BJ (cell line): ENCODE measurements at regions of chr9 and their contacts with region 1.

Region 1: GRCh38 chr9:34701769-34702736 is 7.9 kb downstream of the CCL21 start:
- DNase-seq: peak; percentile 40
- H3K4me3 ChIP-seq: peak overlapping the region; percentile 63
- H3K27me3 ChIP-seq: no peaks in the 10 kb centered on the region
- CTCF ChIP-seq: peak; percentile 100

Region 2: DNA sequence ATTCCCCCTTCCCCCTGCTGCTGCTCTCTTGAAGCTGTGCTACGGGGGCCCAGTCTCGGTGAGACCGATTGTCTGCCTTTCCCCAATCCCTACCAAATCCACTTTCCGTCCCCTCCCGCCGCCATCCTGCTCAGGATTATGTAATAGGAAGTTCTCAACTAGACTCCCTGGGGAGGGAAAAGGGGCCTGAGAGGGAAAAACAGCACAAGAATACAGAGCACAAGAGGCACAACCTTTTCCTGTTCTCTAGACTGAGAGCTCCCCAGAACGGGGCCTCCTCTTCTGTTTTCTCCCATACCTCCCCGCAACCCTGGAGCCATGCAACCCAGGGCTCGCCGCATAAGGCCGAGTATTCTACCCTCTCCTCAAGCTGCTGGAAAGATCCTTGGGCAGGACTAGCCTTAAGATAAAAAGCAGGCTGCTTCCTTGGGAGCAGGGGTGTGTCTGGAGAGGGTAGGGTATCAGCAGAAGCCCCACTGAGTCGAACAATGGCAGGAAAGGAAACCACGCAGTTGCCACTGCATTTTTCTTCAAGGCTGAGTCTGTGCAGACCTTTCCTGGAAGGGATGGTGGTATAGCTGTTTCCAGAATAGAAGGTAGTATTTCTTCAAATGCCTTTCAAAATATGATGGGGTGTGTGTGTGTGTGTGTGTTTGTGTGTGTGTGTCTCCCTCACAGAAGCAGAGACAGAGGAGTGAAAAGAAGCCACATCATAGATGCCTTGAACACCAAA is 338.3 kb before region 1 on chr9:
- CTCF ChIA-PET with region 1: no interaction called
- POLR2A ChIA-PET with region 1: no interaction called
- DNase-seq: no peak
- H3K4me3 ChIP-seq: no peak overlapping the region
- H3K27me3 ChIP-seq: no peaks in the 10 kb centered on the region; the same call in 1 of the 2 replicates
- CTCF ChIP-seq: no peak

Region 3: DNA sequence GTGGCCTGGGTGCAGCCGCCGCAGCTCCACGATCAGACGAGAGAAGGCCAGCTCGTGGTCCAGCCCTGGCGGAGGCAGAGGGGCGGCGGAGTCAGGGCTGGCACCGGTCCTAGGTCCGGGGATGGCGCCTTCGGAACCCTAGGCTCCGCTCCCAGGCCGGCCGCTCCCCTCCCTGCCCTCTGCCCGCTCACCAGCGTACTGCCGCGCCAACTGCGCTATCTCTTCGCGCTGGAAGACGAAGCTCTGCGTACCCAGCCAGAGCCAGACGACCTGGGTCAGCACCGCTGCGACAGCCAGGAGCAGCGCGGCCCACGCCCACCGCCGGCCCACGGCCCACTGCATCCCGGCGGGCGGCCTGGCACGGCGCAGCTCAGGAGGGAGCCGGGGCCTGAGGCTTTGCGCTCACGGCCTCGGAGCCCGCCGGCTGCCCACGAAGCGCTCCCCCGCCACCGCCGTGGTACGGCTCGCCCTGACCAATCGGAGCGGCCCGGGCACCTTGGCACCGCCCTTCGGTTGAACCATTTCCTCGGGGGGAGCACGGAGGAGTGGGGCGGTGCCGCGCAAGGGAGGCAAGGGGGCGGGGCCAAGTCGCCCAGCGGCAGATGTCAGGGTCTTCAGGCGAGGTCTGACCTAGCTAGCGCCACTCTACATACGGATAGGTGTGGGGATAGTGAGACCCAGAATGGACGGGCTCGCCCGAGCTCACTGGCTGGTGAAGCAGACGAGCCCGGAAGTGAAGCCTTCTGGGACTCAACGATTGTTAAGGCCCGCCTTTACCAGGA is 64.5 kb before region 1 on chr9 and contains the start of gene SIGMAR1:
- CTCF ChIA-PET with region 1: interaction called, 34 read pairs
- POLR2A ChIA-PET with region 1: no interaction called
- DNase-seq: no peak
- H3K4me3 ChIP-seq: peak within 1 kb of the TSS; percentile 78
- H3K27me3 ChIP-seq: no peaks in the 10 kb centered on the region
- CTCF ChIP-seq: no peak
- polyA plus RNA-seq, gene SIGMAR1: 65.4 and 95.5 TPM in 2 replicates

Region 4: DNA sequence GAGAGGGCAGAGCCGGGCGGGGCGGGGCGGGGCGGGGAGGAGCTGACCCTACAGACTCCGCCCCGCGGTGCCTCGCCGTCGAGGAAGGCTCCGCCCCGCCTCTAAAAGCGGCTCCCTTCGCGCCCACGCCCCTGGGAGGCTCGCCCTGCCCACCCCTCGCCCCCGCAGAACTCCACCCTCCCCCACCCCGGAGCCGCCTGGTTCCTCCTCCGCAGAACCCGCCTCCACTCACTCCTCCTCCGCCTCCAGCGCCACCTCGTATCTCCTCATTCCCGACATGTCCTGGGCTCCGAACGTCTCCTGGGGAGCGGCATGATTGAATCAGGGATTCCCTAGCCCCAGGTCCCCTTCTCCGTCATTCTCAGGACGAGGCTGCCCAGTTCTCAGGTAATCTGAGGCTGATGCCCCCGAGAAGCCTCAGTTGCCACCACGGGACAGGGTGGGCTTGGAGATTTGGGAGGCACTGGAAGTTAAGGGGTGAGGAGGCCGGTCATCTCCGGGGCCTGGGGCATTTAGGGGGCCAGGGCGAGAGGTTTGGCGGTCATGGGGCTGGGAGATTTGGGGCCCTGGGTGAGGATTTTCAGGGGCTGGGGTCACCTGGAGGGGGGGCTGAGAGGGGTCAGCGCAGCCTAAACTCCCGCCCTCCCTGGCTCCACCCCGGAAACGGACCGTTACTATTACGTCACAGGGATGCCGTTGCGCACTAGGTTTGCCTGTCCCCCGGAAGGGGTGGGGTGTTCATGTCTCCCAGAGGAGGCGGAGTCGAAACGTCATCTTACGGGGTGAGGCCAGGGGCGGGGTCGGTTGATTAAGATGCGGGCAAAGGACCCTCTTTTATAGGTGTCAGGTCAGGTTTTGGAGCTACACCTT is 36.4 kb before region 1 on chr9:
- CTCF ChIA-PET with region 1: interaction called, 16 read pairs
- POLR2A ChIA-PET with region 1: no interaction called
- DNase-seq: peak; percentile 58
- H3K4me3 ChIP-seq: peak overlapping the region; percentile 93
- H3K27me3 ChIP-seq: no peaks in the 10 kb centered on the region
- CTCF ChIP-seq: no peak

Region 5: DNA sequence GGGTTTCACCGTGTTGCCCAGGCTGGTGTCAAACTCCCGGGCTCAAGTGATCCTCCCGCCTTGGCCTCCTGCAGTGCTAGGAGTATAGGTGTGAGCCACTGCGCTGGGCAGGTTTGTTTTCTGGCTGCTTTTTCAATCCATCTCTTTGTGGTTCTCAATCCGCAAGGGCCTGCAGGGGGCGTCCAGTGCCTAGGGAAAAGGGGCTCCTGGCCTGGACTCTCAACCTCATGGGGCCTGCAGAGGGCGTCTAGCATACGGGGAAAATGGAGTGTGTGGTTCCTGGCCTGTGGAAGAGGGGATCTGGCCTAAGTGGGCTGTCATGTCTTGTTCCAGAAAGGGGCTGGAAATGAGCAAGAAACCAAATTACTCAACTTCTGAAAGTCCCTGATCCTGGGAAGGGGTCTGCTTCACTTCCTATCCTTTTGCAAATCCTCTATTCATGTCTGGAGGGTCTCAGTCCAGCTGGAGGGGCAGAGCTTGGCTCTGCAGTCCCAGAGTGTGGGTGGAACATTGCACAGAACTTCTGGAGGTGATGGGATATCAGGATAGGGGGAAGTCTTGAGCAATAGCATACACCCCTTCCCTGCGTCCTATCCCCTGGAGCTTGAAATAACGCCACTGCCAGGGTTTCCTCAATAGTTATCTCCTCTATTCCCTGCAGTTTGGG is 26.9 kb before region 1 on chr9:
- CTCF ChIA-PET with region 1: interaction called, 45 read pairs
- POLR2A ChIA-PET with region 1: no interaction called
- DNase-seq: no peak
- H3K4me3 ChIP-seq: no peak overlapping the region
- H3K27me3 ChIP-seq: no peaks in the 10 kb centered on the region
- CTCF ChIP-seq: peak; percentile 88

Region 6: GRCh38 chr9:34686231-34686630 is 15.8 kb before region 1 on chr9:
- CTCF ChIA-PET with region 1: interaction called, 39 read pairs
- POLR2A ChIA-PET with region 1: no interaction called
- DNase-seq: no peak
- H3K4me3 ChIP-seq: no peak overlapping the region
- H3K27me3 ChIP-seq: no peaks in the 10 kb centered on the region
- CTCF ChIP-seq: no peak

Region 7: DNA sequence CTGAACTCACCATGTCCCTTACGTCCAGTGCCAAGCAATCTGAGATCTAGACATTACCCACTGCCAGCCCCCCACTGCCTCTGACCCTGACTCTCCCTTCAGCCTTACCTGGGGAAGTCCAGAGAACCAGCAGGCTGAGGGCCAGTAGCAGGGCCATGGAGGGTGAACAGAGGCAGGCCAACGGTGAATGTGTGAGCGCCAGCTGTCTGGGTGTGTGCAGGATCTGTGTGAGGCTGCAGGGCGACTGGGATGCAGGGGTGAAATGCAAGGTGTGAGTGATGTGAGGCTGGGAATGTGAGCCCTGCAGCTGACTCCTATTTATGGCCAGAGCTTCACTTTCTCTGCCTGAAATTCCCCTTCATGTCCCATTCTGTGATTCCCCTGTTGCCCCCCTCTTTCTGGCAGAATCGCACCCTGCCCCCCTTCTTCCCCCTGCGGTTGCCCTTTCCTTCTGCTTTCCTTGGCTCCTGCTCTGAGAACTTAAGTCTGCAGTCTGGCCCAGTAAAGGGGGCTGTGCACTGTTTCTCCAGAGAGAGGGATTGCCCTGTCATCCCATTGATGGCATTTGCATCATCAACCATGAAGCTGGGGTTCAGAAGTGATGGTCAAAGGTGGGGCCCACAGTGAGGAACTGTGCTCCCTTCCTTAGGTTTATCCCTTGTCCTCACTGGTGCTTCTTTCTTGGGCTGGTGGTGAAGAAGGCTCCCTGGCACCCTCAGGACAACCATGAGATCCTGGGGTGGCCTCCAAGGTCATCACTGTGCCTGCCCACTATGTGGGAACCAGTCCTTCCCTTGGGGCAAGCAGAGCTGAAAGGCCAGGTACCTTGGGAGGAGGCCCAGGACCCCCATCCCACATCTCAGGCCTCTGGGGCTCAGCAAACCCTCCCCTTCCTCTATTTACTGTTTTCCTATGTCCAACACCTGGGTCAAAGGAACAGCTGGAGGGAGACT is 10.8 kb before region 1 on chr9 and contains the start of gene CCL19:
- CTCF ChIA-PET with region 1: interaction called, 39 read pairs
- POLR2A ChIA-PET with region 1: no interaction called
- DNase-seq: no peak
- H3K4me3 ChIP-seq: no peak within 1 kb of the TSS
- H3K27me3 ChIP-seq: no peaks in the 10 kb centered on the region
- CTCF ChIP-seq: no peak
- polyA plus RNA-seq, gene CCL19: not detected in 2 replicates

Region 8: GRCh38 chr9:34715639-34716215 is 13.7 kb after region 1 on chr9:
- CTCF ChIA-PET with region 1: interaction called, 45 read pairs
- POLR2A ChIA-PET with region 1: no interaction called
- DNase-seq: no peak
- H3K4me3 ChIP-seq: no peak overlapping the region
- H3K27me3 ChIP-seq: peaks cover 5% of the 10 kb centered on the region; the same call in 1 of the 2 replicates
- CTCF ChIP-seq: no peak

Region 9: DNA sequence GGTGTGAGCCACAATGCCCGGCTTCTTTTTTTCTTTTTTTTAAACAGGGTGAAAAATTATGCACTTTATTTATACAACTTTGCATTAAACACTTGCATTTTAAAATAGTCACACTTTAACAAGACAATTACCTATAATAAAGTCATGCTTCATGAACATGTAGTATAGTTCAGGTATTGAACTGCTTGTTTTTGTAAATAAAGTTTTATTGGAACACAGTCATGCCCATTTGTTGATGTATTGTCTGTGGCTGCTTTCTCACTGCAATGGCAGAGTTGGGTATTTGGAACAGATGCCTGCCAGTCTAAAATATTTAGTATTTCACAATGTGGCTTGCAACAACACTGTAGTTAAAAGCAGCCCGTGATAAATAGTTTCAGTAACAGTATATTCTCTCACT is 40.7 kb after region 1 on chr9:
- CTCF ChIA-PET with region 1: no interaction called
- POLR2A ChIA-PET with region 1: no interaction called
- DNase-seq: no peak
- H3K4me3 ChIP-seq: no peak overlapping the region
- H3K27me3 ChIP-seq: peaks cover 1% of the 10 kb centered on the region; the same call in 1 of the 2 replicates
- CTCF ChIP-seq: no peak